ENCODE measurements at regions of chr11 and their contacts with region 1.

Region 1: GRCh38 chr11:65652511-65653231 is 10.0 kb downstream of the RELA start:
- DNase-seq: peak; percentile 91 to 99 (median 95)
- ATAC-seq: peak; percentile 92
- H3K4me3 ChIP-seq: peak overlapping the region; percentile 58
- H3K4me3 Mint-ChIP-seq: peak overlapping the region; percentile 70 to 95 (median 90)
- H3K27ac ChIP-seq: peak overlapping the region; percentile 98
- H3K27ac Mint-ChIP-seq: peak overlapping the region; percentile 90 to 99 (median 98)
- H3K4me1 ChIP-seq: peaks cover 25% of the 10 kb centered on the region in 2 donors
- H3K4me1 Mint-ChIP-seq: peaks cover 36 to 59% (median 51%) of the 10 kb centered on the region in 7 donors
- H3K27me3 ChIP-seq: no peaks in the 10 kb centered on the region
- H3K27me3 Mint-ChIP-seq: no peaks in the 10 kb centered on the region

Region 2: GRCh38 chr11:65637794-65638317 is 14.8 kb before region 1 on chr11 and contains the start of gene SIPA1:
- CTCF ChIA-PET with region 1: interaction called, 4 read pairs
- POLR2A ChIA-PET with region 1: interaction called, 227 read pairs
- intact Hi-C with region 1: loop called (anchors 1 kb)
- DNase-seq: peak; percentile 57 to 93 (median 74)
- ATAC-seq: peak; percentile 62
- H3K4me3 ChIP-seq: peak within 1 kb of the TSS; percentile 90
- H3K4me3 Mint-ChIP-seq: peak within 1 kb of the TSS; percentile 89 to 99 (median 95)
- H3K27ac ChIP-seq: peak within 1 kb of the TSS; percentile 97
- H3K27ac Mint-ChIP-seq: peak within 1 kb of the TSS; percentile 76 to 100 (median 97)
- H3K4me1 ChIP-seq: peaks cover 45 to 58% of the 10 kb centered on the region in 2 donors
- H3K4me1 Mint-ChIP-seq: peaks cover 26 to 52% (median 47%) of the 10 kb centered on the region in 7 donors
- H3K27me3 ChIP-seq: no peaks in the 10 kb centered on the region
- H3K27me3 Mint-ChIP-seq: no peaks in the 10 kb centered on the region
- total RNA-seq, gene SIPA1: 145 to 249 (median 198) TPM

Region 3: DNA sequence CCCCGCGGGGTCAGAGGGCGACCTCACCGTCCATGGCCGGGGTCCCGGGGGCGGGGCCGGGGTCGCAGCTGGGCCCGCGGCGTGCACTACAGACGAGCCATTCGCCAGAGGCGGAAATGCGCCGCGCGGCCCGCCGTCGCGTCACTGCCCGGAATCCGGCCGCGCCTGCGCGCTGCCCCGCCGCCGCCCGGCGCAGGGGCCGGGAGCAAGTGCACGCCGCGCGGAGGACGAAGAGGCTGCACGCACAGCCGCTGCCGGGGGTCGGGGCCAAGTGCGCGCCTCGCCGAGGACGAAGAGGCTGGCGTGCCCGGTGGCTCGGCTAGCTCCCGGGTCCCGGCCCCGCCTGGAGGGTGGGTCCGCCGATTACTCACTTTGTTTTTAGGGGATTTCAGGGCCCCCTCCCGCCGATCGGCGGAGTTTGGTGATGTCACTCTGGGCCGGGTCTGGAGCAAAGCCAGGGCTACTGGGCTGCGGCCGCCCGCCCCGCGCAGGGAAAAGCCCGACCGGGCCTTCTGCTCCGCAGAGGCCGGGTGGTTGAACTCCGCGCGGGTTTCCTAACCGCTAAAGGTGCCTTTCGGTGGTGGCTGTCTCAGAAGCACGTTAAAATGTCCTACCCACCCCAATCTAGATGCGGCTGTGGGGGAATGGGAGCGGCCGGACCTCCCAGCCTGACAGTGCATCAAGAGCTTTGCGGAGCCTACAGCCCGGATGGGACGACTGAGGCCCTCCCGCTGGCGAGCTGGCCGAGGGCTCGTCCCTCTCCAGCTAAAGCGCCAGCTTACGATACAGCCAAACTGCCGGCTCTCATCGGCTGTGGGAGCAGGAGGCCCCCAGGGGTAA is 10.3 kb after region 1 on chr11 and contains the start of gene RELA:
- CTCF ChIA-PET with region 1: interaction called, 3 read pairs
- POLR2A ChIA-PET with region 1: interaction called, 88 read pairs
- intact Hi-C with region 1: loop called (anchors 1 kb)
- DNase-seq: peak; percentile 84 to 92 (median 89)
- ATAC-seq: peak; percentile 92
- H3K4me3 ChIP-seq: peak within 1 kb of the TSS; percentile 85
- H3K4me3 Mint-ChIP-seq: peak within 1 kb of the TSS; percentile 86 to 93 (median 90)
- H3K27ac ChIP-seq: peak within 1 kb of the TSS; percentile 99
- H3K27ac Mint-ChIP-seq: peak within 1 kb of the TSS; percentile 86 to 95 (median 92)
- H3K4me1 ChIP-seq: peaks cover 20 to 33% of the 10 kb centered on the region in 2 donors
- H3K4me1 Mint-ChIP-seq: peaks cover 10 to 43% (median 31%) of the 10 kb centered on the region in 7 donors
- H3K27me3 ChIP-seq: no peaks in the 10 kb centered on the region
- H3K27me3 Mint-ChIP-seq: no peaks in the 10 kb centered on the region
- total RNA-seq, gene RELA: 106 to 303 (median 165) TPM

Region 4: DNA sequence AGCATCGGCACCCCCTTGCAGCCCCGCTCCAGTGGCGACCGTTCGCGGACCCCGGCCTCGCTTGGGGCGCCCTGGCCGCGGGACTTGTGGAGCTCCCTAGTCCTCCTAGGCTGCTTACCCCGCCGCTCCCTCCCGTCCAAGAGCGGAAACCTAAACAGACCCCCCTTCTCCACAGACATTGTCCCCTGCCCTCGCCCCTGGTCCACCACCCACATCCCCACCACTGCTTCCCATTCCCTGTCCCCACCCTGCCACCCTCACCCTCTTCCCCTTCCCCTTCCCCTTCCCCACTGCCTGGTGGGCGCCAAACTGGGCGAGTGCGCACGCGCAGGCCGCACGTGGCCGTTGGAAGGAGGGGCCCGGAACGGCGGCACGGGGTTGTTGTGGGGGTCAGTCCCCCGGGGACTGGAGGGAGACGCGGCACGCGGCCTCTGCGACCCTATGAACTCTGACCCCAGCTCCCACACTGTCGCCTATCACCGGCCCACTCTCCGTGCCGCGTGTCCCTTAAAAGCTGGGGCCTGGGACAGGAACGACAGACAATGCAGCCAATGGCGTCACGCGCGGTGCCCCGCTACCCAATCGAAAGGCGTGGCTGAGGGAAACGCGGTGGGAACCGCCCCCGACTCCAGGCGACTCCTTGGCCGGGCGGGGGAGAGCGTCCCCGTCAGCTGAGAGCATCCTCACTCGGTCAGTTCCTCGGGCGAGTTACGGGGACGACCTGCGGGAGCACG is 180.8 kb after region 1 on chr11 and contains the start of gene SNX32:
- CTCF ChIA-PET with region 1: no interaction called
- POLR2A ChIA-PET with region 1: no interaction called
- intact Hi-C with region 1: loop called in 1 of 2 experiments (anchors 5 kb)
- DNase-seq: peak; percentile 88 to 94 (median 93)
- ATAC-seq: peak; percentile 100
- H3K4me3 ChIP-seq: peak within 1 kb of the TSS; percentile 91
- H3K4me3 Mint-ChIP-seq: no peak within 1 kb of the TSS
- H3K27ac ChIP-seq: peak within 1 kb of the TSS; percentile 78
- H3K27ac Mint-ChIP-seq: peak within 1 kb of the TSS in 1 of 9 donors; percentile 91
- H3K4me1 ChIP-seq: peaks cover 10 to 13% of the 10 kb centered on the region in 2 donors
- H3K4me1 Mint-ChIP-seq: peaks cover 7 to 17% (median 7%) of the 10 kb centered on the region in 7 donors
- H3K27me3 ChIP-seq: no peaks in the 10 kb centered on the region
- H3K27me3 Mint-ChIP-seq: peaks cover 0 to 21% (median 0%) of the 10 kb centered on the region in 5 donors
- total RNA-seq, gene SNX32: 0.81 to 2.0 (median 1.1) TPM

Region 5: GRCh38 chr11:66051766-66052663 is 399.3 kb after region 1 on chr11 and contains the start of gene SF3B2:
- CTCF ChIA-PET with region 1: no interaction called
- POLR2A ChIA-PET with region 1: no interaction called
- intact Hi-C with region 1: loop called in 1 of 2 experiments (anchors 5 kb)
- DNase-seq: peak; percentile 81 to 94 (median 93)
- ATAC-seq: peak; percentile 99
- H3K4me3 ChIP-seq: peak within 1 kb of the TSS; percentile 88
- H3K4me3 Mint-ChIP-seq: peak within 1 kb of the TSS; percentile 95 to 100 (median 98)
- H3K27ac ChIP-seq: peak within 1 kb of the TSS; percentile 93
- H3K27ac Mint-ChIP-seq: peak within 1 kb of the TSS; percentile 95 to 99 (median 98)
- H3K4me1 ChIP-seq: peaks cover 14 to 18% of the 10 kb centered on the region in 2 donors
- H3K4me1 Mint-ChIP-seq: peaks cover 17 to 44% (median 38%) of the 10 kb centered on the region in 7 donors
- H3K27me3 ChIP-seq: no peaks in the 10 kb centered on the region
- H3K27me3 Mint-ChIP-seq: peaks cover 0 to 9% (median 0%) of the 10 kb centered on the region in 5 donors
- total RNA-seq, gene SF3B2: 163 to 248 (median 206) TPM

Measured in naive thymus-derived CD4-positive, alpha-beta T cell (primary cell).